Activated naive CD4-positive, alpha-beta T cell treated with anti-CD3 and anti-CD28 coated beads for 36 hours (primary cell): ENCODE measurements at regions of chr1 and their contacts with region 1.

Region 1: DNA sequence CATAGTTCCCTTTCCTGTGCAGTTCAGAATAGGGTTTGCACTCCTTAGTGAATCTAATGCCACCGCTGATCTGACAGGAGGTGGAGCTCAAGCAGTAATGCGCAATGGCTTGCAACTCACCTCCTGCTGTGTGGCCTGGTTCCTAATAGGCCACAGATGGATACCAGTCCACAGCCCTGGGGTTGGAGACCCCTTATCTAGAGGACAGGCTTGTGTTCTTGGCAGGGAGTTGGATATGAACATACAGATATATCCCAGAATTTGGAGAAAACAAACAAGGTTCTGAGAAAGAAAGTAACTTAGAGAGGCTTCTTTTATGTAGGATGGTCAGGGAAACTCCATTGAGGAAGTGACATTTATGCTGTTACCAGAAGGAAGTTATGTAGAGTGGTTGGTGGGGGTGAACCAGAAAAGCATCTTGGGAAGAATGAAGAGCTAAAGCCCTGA is 5.1 kb upstream of the PTPRC start:
- DNase-seq: peak; percentile 33
- H3K4me3 Mint-ChIP-seq: peak overlapping the region; percentile 52
- H3K27ac Mint-ChIP-seq: peak overlapping the region; percentile 100
- H3K4me1 Mint-ChIP-seq: peaks cover 87% of the 10 kb centered on the region
- H3K27me3 Mint-ChIP-seq: no peaks in the 10 kb centered on the region

Region 2: DNA sequence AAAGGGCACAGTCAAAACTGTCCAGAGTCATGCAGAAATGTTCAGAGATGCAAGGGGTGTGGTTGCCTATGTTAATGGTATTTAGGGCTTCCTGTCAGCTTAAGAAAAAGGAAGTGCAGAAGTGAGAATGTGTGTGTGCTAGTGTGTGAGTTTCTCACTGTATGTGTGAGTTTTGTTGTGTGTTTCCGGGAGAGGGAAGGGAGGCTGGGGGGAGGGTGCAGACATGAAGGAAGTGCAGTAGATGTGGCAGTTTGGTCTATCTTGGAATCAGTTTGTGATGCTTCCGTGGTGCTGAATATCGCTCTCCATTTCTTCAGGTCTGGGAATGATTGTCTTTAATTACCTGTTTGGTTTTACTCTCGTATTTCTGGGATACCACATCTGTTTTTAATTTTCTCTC is 76.7 kb before region 1 on chr1:
- CTCF ChIA-PET with region 1: no interaction called
- intact Hi-C with region 1: no loop called
- DNase-seq: peak; percentile 85
- H3K4me3 Mint-ChIP-seq: peak overlapping the region; percentile 73
- H3K27ac Mint-ChIP-seq: peak overlapping the region; percentile 85
- H3K4me1 Mint-ChIP-seq: peaks cover 81% of the 10 kb centered on the region
- H3K27me3 Mint-ChIP-seq: no peaks in the 10 kb centered on the region

Region 3: DNA sequence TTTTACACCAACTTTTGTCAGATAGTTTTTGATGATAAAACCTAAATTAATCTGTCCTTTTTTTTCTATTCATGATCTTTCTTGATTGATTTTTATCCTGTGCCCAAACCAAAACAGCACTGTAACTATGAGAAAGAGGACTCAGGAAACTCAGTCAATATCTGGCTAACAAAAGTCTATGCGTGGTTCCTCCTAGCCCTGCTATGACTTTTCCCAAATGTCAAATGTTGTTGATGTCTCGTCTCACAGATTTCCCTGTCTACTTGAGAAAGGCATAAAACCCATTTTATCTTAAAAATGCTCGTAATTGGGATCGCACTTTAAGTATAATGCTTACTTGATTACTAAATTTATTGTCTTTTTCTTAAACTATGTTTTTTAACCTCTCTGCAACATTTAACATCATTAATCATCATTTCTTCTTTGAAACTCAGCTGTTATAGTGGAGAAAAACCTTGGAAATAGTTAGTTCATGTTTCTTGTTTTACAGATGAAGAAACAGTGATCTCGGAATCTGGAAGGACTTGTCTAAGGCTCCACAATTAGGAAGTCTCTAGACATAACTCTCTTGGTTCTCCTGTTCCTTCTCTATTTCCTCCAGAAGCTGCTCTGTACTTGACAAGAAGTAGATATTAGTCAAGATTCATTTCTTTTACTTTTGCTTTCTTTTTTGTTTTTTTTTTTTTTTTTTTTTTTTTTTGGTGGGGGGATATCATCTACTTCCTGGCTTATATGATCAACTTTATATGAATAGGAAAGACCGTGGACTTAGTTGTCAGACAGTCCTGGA is 21.0 kb before region 1 on chr1:
- CTCF ChIA-PET with region 1: interaction called, 3 read pairs
- intact Hi-C with region 1: loop called (anchors 1 kb)
- DNase-seq: no peak
- H3K4me3 Mint-ChIP-seq: peak overlapping the region; percentile 82
- H3K27ac Mint-ChIP-seq: peak overlapping the region; percentile 98
- H3K4me1 Mint-ChIP-seq: peaks cover 80% of the 10 kb centered on the region
- H3K27me3 Mint-ChIP-seq: no peaks in the 10 kb centered on the region

Region 4: DNA sequence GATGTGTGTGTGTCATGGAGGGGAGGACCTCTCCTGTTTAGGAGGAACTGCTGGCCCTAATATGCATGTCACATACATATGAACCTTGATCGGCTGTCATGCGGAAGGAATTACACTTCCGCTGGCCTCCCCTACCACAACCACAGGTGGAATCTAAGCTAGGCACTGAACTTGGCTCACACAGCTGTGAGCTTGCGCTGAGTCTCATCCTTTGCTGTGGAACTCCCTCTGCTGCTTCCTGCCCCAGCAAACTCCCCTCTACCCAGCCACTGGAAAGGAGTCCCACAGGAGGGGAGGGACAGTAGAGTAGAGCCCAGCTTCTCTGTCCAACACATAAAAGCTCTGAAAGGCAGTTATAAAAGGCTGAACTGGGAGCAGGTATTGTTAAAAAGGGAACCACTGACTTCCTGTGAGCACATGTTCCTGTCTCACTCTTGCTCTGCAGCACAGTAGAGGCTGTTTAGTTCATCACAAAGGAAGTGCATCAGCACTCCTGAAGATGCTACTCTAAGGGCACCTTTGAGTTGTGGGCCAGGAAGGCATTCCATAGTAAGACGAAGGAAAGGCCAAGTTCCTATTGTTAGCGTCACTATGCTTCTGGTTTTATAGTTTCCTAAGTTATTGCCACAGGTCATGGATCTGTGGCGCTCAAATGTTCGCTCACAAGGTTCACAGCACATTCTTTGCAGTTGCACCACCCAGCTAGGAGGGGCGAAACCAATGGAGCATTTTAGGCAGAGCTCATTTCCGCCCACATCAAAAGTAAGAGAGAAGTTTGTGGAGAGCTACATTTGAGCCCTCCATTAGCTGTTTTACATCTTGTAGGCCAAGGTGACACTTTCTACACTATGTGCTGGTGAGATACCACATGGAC is 12.5 kb before region 1 on chr1:
- CTCF ChIA-PET with region 1: interaction called, 23 read pairs
- intact Hi-C with region 1: loop called (anchors 1 kb)
- DNase-seq: peak; percentile 77
- H3K4me3 Mint-ChIP-seq: peak overlapping the region; percentile 82
- H3K27ac Mint-ChIP-seq: peak overlapping the region; percentile 100
- H3K4me1 Mint-ChIP-seq: peaks cover 86% of the 10 kb centered on the region
- H3K27me3 Mint-ChIP-seq: no peaks in the 10 kb centered on the region

Region 5: DNA sequence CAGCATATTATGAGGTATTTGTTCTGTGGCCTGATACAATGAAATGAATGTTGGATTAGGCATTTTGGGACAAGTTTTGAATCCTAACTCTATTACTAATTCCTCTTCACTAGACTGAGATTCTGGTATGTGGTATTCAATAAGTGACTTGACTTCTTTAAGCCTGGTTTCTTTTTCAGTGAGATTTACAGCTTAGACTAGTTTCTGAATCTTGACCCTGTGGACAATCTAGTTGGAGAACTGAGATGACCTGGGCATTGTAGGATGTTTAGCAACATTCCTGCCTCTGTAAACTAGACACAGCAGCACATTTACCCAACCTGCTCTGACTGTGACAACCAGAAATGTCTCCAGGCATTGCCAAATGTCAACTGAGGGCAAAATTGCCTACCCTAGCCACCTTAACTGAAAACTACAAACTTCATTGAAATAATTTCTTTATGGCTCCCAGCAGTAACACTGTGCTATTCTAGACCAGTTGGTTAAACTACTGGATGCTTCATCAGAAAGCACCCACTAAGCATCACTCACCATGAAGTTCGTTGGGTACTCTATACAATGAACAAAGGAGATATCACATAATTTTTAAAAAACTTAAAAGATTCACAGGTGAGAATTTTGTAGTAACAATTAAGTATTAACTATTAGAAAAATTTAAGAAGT is 21.9 kb after region 1 on chr1:
- CTCF ChIA-PET with region 1: no interaction called
- intact Hi-C with region 1: no loop called
- DNase-seq: no peak
- H3K4me3 Mint-ChIP-seq: peak overlapping the region; percentile 72
- H3K27ac Mint-ChIP-seq: peak overlapping the region; percentile 100
- H3K4me1 Mint-ChIP-seq: peaks cover 63% of the 10 kb centered on the region
- H3K27me3 Mint-ChIP-seq: no peaks in the 10 kb centered on the region

Region 6: DNA sequence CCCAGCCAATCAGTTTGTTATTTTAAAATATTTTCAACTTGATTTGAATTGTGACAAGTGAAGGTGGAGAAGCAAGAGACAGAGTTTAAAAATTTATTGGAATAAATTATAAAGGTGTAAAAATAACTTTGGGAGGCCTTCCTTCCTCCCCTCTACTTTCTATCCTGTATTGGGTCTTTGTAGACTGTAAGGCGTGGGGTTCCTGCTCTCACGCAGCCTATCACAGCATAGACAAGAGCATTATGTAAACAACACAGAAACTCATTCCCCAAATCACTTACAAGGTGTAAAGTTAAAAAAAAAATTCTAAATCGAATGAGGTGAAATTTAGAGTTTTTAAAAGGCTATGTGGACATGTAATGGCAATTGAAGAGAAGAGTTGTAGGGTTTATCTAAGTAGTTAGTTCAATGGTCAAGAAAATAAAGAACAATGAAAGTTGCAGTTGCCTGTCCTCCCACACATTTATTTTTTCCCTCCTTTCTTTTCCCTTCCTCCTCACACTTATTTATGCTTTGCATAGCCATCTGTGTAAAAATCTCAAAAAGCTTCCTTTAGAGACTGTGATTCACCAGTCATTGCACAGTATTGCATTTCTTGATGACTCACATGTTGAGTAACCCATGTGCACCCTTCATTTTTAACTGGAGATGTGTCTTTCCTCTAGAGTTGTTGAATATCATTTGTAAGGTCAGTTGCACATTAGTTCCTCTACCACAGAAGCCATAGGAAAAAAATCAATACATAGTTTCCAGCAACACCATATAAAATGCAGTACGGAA is 247.3 kb after region 1 on chr1:
- CTCF ChIA-PET with region 1: no interaction called
- intact Hi-C with region 1: no loop called
- DNase-seq: peak; percentile 40
- H3K4me3 Mint-ChIP-seq: no peak overlapping the region
- H3K27ac Mint-ChIP-seq: peak overlapping the region; percentile 32
- H3K4me1 Mint-ChIP-seq: peaks cover 33% of the 10 kb centered on the region
- H3K27me3 Mint-ChIP-seq: no peaks in the 10 kb centered on the region